CD8-positive, alpha-beta T cell (primary cell): ENCODE measurements at regions of chr11 and their contacts with region 1.

Region 1: DNA sequence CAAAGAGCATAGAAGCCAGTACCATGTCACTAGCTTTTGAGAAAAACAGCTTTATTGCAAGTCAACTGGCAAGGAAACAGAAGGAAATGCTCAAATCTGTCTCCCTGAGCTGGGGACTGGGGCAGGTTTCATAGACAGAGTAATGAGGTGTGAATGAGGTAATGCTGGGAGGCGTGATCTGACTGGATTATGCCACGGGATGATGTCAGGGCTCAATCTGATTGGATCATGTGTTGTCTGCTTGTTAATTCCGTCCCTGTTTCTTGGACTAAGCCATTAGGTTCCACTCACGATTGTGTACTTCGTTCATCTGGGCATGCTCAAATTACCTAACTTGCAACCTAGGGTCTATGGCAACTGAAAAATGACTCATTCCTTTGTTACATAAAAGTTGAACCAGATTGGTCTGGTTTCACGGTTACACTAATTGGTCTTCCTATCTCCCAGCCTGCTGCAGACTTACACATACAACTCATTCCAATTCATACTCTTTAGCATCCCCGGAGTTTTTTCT is 20.2 kb upstream of the OR10A5 start:
- DNase-seq: no peak
- ATAC-seq: no peak
- H3K4me3 ChIP-seq: no peak overlapping the region
- H3K4me3 Mint-ChIP-seq: no peak overlapping the region
- H3K27ac ChIP-seq: no peak overlapping the region
- H3K27ac Mint-ChIP-seq: no peak overlapping the region
- H3K4me1 ChIP-seq: no peaks in the 10 kb centered on the region
- H3K4me1 Mint-ChIP-seq: no peaks in the 10 kb centered on the region
- H3K27me3 ChIP-seq: peaks cover 0 to 3% of the 10 kb centered on the region in 2 experiments
- H3K27me3 Mint-ChIP-seq: peaks cover 12% of the 10 kb centered on the region
- CTCF ChIP-seq: no peak

Region 2: DNA sequence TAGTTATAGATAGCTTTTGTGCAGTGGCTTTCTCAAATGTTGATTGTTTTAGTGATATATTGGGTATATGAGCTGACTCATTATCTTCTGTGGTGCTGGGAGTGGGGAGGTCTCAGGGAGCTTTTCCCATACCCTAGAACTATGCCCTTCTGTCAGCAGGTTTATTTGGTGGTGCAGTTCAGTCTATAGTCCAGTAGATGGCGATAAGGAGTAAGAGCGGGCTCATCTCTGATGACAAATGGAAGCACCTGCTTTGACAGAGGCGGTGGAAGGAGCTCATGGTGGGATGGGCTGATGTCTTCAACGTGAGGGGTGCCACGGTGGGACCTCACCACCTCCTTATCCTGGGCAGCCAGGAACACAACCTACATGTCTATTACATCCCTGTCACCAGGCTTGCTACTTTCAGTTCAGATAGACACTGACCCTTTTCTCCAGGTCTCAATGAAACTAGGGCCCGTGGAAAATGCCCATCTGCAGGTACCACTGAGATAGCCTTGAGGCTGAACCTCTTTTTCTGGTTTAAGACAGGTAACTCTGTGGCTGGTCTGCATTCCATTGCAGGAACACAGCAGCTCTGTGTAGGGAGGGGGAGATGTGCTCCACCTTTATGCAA is 12.8 kb before region 1 on chr11:
- CTCF ChIA-PET with region 1: interaction called, 13 read pairs
- POLR2A ChIA-PET with region 1: no interaction called
- intact Hi-C with region 1: no loop called
- DNase-seq: peak in 8 of 9 experiments; percentile 3 to 63 (median 24)
- ATAC-seq: peak; percentile 96
- H3K4me3 ChIP-seq: no peak overlapping the region
- H3K4me3 Mint-ChIP-seq: no peak overlapping the region
- H3K27ac ChIP-seq: no peak overlapping the region
- H3K27ac Mint-ChIP-seq: no peak overlapping the region
- H3K4me1 ChIP-seq: no peaks in the 10 kb centered on the region
- H3K4me1 Mint-ChIP-seq: no peaks in the 10 kb centered on the region
- H3K27me3 ChIP-seq: no peaks in the 10 kb centered on the region
- H3K27me3 Mint-ChIP-seq: peaks cover 30% of the 10 kb centered on the region
- CTCF ChIP-seq: peak; percentile 92

Region 3: DNA sequence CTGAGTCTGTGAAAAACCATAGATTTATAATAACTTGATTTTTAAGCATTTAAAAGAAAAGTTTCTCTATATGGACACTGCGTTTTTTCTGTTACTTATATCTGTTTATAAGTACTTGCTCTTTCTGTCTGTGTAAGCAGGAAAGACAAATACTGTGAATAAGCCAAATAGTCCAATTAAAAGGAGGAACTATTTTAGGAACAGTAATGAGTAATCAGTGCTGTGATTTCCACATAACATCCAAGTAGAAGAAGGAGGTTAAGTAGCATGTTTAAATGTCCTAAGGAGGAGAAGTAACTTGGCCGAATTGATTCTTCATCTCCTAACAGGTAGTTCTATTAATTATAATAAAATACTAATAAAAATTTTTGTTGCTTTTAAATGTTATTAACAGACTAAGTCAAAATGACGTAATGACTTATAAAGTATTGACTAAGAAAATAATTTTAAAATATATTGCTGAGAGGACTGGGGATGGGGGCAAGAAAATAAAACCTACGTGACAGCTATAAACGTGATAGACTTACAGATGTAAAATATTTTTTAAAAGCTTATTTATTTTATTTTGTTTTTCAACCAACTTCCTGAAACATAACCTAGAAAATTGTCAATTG is 154.2 kb after region 1 on chr11:
- CTCF ChIA-PET with region 1: no interaction called
- POLR2A ChIA-PET with region 1: no interaction called
- intact Hi-C with region 1: no loop called
- DNase-seq: no peak
- ATAC-seq: no peak
- H3K4me3 ChIP-seq: no peak overlapping the region
- H3K4me3 Mint-ChIP-seq: no peak overlapping the region
- H3K27ac ChIP-seq: no peak overlapping the region
- H3K27ac Mint-ChIP-seq: no peak overlapping the region
- H3K4me1 ChIP-seq: no peaks in the 10 kb centered on the region
- H3K4me1 Mint-ChIP-seq: no peaks in the 10 kb centered on the region
- H3K27me3 ChIP-seq: no peaks in the 10 kb centered on the region
- H3K27me3 Mint-ChIP-seq: no peaks in the 10 kb centered on the region
- CTCF ChIP-seq: no peak